ENCODE measurements at regions of chr6 and their contacts with region 1.

Region 1: GRCh38 chr6:85642774-85643536 is at the start of gene SYNCRIP:
- DNase-seq: peak; percentile 98
- ATAC-seq: peak; percentile 82
- H3K4me3 Mint-ChIP-seq: peak within 1 kb of the TSS; percentile 90
- H3K27ac Mint-ChIP-seq: peak within 1 kb of the TSS; percentile 99
- H3K4me1 Mint-ChIP-seq: peaks cover 38% of the 10 kb centered on the region
- H3K27me3 Mint-ChIP-seq: peaks cover 1% of the 10 kb centered on the region
- total RNA-seq, gene SYNCRIP: 136 to 137 TPM

Region 2: DNA sequence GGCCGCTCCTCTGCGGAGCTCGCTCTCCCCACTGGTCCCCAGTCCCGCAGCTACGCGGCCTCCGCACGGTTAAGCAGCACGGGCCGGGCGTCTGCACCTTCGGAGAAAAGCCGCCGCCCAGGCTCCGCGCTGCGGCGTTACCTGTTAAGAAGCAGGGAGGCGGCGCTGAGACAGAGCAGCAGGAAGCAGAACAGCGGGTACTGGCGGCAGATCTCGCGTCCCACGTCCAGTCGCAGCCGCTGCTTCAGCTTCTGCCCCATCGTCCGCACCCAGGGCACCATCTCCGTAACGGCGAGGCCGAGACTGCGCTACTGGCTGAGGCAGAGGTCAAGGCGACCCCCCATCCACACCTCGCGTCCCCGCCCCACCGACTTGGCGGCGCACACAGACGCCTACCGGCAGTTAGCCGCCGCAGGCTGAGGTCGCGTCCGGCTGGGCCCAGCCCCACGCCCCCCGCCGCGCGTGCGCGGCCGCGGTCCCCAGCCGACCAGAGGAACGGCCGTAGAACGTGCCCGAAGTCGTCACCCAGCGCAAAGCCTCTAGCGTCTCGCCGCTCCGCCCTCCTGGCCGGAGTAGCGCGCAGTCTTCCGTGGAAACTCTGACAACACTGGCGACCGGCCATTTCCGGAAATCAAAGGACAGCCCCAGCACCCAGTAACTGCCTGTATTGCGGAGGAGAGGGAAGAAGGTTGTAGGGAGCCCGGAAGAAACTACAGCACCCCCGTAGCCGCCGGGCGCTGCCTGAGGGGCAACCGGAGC is 49.3 kb before region 1 on chr6 and contains the start of gene SNX14:
- CTCF ChIA-PET with region 1: interaction called, 7 read pairs
- POLR2A ChIA-PET with region 1: interaction called, 38 read pairs
- DNase-seq: peak; percentile 87
- ATAC-seq: peak; percentile 85
- H3K4me3 Mint-ChIP-seq: peak within 1 kb of the TSS; percentile 93
- H3K27ac Mint-ChIP-seq: peak within 1 kb of the TSS; percentile 96
- H3K4me1 Mint-ChIP-seq: peaks cover 29% of the 10 kb centered on the region
- H3K27me3 Mint-ChIP-seq: no peaks in the 10 kb centered on the region
- total RNA-seq, gene SNX14: 50.1 to 50.3 TPM

Region 3: GRCh38 chr6:85669735-85670194 is 26.8 kb after region 1 on chr6:
- CTCF ChIA-PET with region 1: interaction called, 106 read pairs
- POLR2A ChIA-PET with region 1: interaction called, 501 read pairs
- DNase-seq: peak; percentile 79
- ATAC-seq: peak; percentile 91
- H3K4me3 Mint-ChIP-seq: peak overlapping the region; percentile 52
- H3K27ac Mint-ChIP-seq: peak overlapping the region; percentile 93
- H3K4me1 Mint-ChIP-seq: peaks cover 59% of the 10 kb centered on the region
- H3K27me3 Mint-ChIP-seq: no peaks in the 10 kb centered on the region

Region 4: GRCh38 chr6:85792254-85792653 is 149.3 kb after region 1 on chr6:
- CTCF ChIA-PET with region 1: no interaction called
- POLR2A ChIA-PET with region 1: no interaction called
- DNase-seq: no peak
- ATAC-seq: no peak
- H3K4me3 Mint-ChIP-seq: no peak overlapping the region
- H3K27ac Mint-ChIP-seq: no peak overlapping the region
- H3K4me1 Mint-ChIP-seq: no peaks in the 10 kb centered on the region
- H3K27me3 Mint-ChIP-seq: peaks cover 4% of the 10 kb centered on the region

Measured in activated CD8-positive, alpha-beta T cell treated with anti-CD3 and anti-CD28 coated beads, Interleukin-2, amount 10 ng/mL, durations not matched to agents 7 days and 5 days (primary cell).